Heart right ventricle (tissue), 16 donors: ENCODE measurements at regions of chr3 and their contacts with region 1.

Region 1: DNA sequence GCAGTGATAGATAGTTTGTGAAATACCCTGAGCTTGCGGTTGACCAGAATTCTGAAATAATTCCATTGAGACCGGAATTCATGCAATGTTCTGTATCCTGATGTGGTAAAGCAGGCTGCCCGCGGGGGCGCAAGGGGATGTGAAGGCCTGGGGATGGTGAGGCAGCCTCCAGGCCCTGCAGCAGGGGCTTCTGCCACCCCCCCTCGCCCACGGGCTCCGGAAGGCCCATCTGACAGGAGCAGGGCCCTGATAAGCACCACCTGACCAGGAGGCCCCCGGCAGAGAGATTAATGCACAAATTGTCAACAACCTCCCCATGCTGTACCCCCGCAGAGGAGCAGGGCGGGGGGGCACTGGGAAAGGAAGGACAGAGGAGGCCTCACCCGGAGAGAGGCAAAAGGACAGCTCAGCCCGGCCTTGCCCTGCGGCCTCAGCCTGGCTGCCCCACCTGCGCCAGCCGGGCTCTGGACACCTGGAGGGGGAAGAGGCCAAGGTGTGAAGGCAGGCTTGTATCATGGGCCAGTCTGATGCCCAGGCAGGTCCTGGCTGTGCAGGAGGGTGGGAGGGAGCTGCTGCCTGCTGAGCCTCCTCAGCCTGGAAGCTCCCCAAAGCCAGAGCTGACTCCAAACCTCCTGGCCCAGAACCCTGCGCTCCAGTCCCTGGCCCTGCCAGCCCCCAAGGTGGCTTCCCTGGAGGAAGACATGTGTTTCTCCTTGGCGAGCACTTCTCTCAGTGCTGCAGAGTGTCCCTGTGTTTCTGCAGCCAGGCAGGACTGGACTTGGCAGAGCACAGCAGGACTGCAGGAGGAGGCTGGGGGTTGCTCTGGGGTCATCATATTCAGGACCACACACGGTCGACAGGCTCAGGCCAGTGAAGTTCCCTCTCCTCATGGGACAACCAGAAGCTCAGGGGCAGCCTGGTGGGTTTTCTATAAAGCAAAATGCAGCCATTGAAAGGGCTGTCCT is 46.5 kb downstream of the RPN1 start:
- DNase-seq: no peak
- ATAC-seq: no peak
- H3K4me3 ChIP-seq: no peak overlapping the region
- H3K27ac ChIP-seq: no peak overlapping the region
- H3K4me1 ChIP-seq: peaks cover 0 to 30% (median 11%) of the 10 kb centered on the region in 9 donors
- H3K27me3 ChIP-seq: no peaks in the 10 kb centered on the region
- CTCF ChIP-seq: no peak

Region 2: GRCh38 chr3:128075516-128076482 is 528.3 kb before region 1 on chr3:
- intact Hi-C with region 1: loop called in 1 of 10 experiments (anchors 5 kb)
- DNase-seq: peak; percentile 85 to 92
- ATAC-seq: peak; percentile 84 to 95 (median 92)
- H3K4me3 ChIP-seq: peak overlapping the region; percentile 38 to 63 (median 56)
- H3K27ac ChIP-seq: peak overlapping the region in 9 of 10 donors; percentile 33 to 65 (median 55)
- H3K4me1 ChIP-seq: peaks cover 6 to 68% (median 46%) of the 10 kb centered on the region in 9 donors
- H3K27me3 ChIP-seq: no peaks in the 10 kb centered on the region
- CTCF ChIP-seq: peak; percentile 94 to 99 (median 97)

Region 3: DNA sequence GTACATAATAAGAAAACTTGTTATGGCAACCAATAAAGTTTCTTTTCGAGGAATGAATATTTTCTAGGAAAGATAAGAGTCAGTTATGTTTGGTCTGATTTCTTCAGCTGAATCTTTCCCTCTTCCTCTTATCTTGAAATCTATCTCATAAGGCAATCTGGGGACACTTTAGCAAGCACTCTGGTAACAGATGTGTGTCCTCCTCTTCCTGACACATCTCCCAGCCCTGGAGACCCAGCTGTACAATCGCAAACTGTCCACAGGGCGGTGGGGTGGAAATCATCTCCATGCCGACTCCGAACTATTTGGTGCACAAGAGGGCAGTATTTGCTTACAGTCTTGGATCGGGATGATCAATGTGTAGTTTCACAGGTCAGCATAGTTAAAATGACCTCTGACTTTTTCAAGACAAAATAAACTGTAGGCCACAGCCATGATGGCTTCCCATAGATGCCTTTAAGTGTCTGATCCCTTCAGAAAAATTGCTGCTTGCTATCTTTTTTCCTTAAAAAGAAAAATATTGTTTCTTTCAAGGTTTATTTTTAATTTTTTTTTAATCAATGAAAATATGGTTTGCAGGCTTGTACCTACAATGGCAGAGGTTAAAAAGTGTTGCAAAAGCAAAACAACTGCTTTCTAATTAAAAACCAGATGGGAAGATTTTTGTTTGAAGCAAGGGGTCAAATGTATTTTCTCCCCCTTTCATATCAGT is 433.1 kb before region 1 on chr3:
- intact Hi-C with region 1: loop called in 5 of 10 experiments (anchors 5 to 10 kb)
- DNase-seq: peak; percentile 23 to 70
- ATAC-seq: peak in 7 of 8 donors; percentile 66 to 76 (median 72)
- H3K4me3 ChIP-seq: no peak overlapping the region
- H3K27ac ChIP-seq: no peak overlapping the region
- H3K4me1 ChIP-seq: peaks cover 11 to 80% (median 54%) of the 10 kb centered on the region in 9 donors
- H3K27me3 ChIP-seq: no peaks in the 10 kb centered on the region
- CTCF ChIP-seq: peak; percentile 30 to 87 (median 71)

Region 4: DNA sequence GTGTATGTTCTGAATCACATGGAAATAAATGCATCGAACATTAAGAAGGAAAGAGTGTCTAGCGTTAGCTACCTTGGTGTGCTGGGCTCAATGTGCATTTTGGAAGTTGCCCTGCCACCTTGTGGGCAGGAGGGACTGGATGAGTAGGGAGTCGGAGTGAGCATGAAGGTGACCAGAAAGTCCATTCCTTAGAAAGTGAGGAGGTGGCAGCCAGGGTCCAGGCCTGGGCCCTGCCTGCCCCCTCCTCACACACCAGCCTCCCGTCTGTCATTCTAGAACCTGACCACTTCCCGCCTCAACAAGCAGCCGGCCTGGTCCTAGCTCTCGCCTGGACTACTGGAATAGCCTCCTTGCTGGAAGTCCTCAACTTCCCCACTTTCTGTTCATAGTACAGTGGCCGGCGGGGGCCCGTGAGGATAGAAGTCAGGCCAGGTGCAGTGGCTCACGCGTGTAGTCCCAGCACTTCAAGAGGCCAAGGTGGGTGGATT is 100.9 kb before region 1 on chr3:
- intact Hi-C with region 1: loop called in 1 of 10 experiments (anchors 5 kb)
- DNase-seq: no peak
- ATAC-seq: peak in 2 of 8 donors; percentile 18 to 35
- H3K4me3 ChIP-seq: no peak overlapping the region
- H3K27ac ChIP-seq: no peak overlapping the region
- H3K4me1 ChIP-seq: peaks cover 0 to 5% (median 1%) of the 10 kb centered on the region in 9 donors
- H3K27me3 ChIP-seq: peaks cover 3 to 49% (median 22%) of the 10 kb centered on the region in 7 donors
- CTCF ChIP-seq: peak in 7 of 9 donors; percentile 17 to 39 (median 25)

Region 5: GRCh38 chr3:128549283-128550112 is 54.6 kb before region 1 on chr3:
- intact Hi-C with region 1: no loop called
- DNase-seq: peak; percentile 77 to 89
- ATAC-seq: peak; percentile 82 to 96 (median 92)
- H3K4me3 ChIP-seq: peak overlapping the region in 2 of 10 donors; percentile 8 to 20
- H3K27ac ChIP-seq: peak overlapping the region; percentile 51 to 88 (median 74)
- H3K4me1 ChIP-seq: peaks cover 2 to 45% (median 37%) of the 10 kb centered on the region in 9 donors
- H3K27me3 ChIP-seq: peaks cover 0 to 22% (median 1%) of the 10 kb centered on the region in 7 donors
- CTCF ChIP-seq: no peak

Region 6: DNA sequence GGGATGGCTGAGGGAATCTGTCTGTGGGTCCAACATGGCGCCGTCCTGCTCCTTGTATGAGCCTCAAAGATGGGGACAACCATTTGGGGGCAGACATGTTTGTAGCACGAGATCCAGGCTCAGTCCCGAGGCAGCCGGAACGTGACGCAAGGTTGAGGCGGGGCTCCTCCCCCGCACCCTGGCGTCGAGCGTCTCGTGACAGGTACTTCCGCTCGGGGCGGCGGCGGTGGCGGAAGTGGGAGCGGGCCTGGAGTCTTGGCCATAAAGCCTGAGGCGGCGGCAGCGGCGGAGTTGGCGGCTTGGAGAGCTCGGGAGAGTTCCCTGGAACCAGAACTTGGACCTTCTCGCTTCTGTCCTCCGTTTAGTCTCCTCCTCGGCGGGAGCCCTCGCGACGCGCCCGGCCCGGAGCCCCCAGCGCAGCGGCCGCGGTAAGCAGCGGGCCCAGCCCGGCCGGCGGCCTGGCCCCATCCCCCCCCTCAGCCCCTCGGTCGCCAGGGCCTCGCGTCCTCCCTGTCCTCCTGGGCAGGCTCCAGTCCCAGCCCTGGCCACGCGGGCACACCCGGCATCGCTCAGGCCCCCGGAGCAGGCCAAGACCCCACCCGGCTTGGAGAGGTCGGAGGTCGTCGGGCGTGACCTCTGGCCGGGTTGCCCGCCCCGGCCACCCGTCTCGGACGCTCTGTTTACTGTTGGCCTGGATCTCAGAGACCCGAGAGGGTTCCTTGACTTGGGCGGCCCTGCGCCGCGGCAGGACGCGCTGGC is 122.0 kb after region 1 on chr3 and contains the start of gene RAB7A:
- intact Hi-C with region 1: no loop called
- DNase-seq: peak; percentile 97 to 98
- ATAC-seq: peak; percentile 98 to 100 (median 99)
- H3K4me3 ChIP-seq: peak within 1 kb of the TSS; percentile 58 to 100 (median 94)
- H3K27ac ChIP-seq: peak within 1 kb of the TSS; percentile 90 to 99 (median 96)
- H3K4me1 ChIP-seq: peaks cover 12 to 50% (median 42%) of the 10 kb centered on the region in 9 donors
- H3K27me3 ChIP-seq: no peaks in the 10 kb centered on the region
- CTCF ChIP-seq: peak in 2 of 9 donors; percentile 15 to 24
- total RNA-seq, gene RAB7A: 234 to 348 (median 310) TPM